BJ (cell line): ENCODE measurements at regions of chr7 and their contacts with region 1.

Region 1: DNA sequence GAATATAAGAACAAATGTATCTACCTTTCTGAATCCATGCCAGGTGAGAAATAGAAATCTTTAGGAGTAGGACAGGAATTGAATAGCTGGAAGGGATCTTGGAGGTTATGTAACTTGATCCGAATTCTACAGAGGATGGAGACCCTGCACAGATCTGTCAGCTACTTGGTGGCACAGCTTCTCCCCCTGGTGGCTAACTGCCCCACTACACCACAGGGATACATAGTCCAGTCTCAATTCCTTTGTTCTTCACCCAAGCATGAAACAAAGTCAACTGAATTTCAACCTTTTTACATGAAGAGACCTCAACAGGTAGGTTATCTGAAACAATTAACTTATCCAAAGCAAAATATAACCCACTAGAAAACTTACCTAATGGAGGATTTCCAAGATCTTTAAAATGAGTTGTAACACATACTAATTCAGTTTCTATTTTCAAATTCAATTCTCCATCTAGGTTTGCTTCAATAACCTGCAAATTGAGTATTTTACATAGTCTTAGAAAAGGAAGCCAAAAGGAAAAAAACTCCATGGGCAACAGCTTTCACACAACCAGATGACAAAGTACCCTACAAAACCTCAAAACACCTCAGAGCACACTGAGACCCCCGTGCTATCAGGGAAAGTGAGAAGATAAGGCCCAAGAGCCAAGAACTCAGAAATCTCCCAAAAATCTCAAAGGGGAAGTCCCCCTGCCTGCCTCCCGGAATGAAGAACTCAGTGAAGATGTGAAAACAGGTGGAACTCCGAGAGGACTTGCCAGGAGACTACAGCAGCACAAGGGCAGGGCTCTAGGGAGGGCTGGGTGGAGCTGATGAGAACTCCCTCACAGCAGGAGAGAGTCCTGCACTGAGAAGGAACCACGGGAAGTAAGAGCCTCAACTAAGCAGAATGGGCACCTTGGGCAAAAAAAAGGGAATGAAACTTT is 10.3 kb downstream of the HUS1 start:
- DNase-seq: no peak
- H3K4me3 ChIP-seq: no peak overlapping the region
- H3K27me3 ChIP-seq: no peaks in the 10 kb centered on the region
- CTCF ChIP-seq: peak; percentile 94

Region 2: GRCh38 chr7:47852330-47853245 is 116.5 kb before region 1 on chr7:
- CTCF ChIA-PET with region 1: no interaction called
- POLR2A ChIA-PET with region 1: no interaction called
- DNase-seq: no peak
- H3K4me3 ChIP-seq: no peak overlapping the region
- H3K27me3 ChIP-seq: 0 out of 2 replicates have a peak, but pooled peaks cover 2% of the 10 kb centered on the region
- CTCF ChIP-seq: 0 out of 2 replicates have a peak, but pooled peaks have one; percentile 19

Region 3: DNA sequence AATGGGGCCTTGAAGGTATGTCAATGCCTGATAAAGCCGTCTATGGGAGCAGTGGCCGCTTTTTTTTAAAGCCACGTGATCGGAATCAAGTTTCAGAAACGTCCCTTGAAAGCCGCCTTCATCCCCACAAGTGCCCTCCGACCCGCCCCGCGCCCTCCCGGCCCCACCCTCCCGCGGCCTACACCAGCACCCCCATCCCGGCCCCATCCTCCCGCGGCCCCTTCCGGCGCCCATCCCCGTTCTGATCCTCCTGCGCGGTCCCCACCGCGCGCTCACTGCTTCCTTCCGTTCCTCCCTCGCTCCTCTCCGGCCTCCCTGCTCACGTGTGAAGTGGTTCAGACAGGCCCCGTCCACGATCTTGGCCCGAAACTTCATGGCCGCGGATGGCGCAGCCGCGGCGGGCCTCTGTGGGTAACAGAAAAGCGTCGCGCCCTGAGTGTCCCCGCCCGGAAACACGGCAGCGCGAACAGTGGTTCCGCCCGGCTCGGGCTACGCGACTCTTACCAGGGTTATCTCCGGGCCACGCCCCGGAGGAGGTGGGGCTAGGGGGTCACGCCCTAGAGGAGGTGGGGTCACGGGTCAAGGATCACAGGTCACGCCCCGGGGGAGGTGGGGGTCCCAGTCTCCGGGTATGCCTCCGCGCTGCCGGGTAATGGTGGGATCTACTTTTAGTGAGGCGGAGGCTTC is 10.2 kb after region 1 on chr7 and contains the start of gene HUS1:
- CTCF ChIA-PET with region 1: interaction called, 17 read pairs
- POLR2A ChIA-PET with region 1: no interaction called
- DNase-seq: peak; percentile 33
- H3K4me3 ChIP-seq: peak within 1 kb of the TSS; percentile 74
- H3K27me3 ChIP-seq: no peaks in the 10 kb centered on the region
- CTCF ChIP-seq: no peak
- polyA plus RNA-seq, gene HUS1: 14.1 and 23.7 TPM in 2 replicates

Region 4: GRCh38 chr7:48351900-48352299 is 382.8 kb after region 1 on chr7:
- CTCF ChIA-PET with region 1: no interaction called
- POLR2A ChIA-PET with region 1: no interaction called
- DNase-seq: no peak
- H3K4me3 ChIP-seq: no peak overlapping the region
- H3K27me3 ChIP-seq: no peaks in the 10 kb centered on the region
- CTCF ChIP-seq: no peak

Region 5: DNA sequence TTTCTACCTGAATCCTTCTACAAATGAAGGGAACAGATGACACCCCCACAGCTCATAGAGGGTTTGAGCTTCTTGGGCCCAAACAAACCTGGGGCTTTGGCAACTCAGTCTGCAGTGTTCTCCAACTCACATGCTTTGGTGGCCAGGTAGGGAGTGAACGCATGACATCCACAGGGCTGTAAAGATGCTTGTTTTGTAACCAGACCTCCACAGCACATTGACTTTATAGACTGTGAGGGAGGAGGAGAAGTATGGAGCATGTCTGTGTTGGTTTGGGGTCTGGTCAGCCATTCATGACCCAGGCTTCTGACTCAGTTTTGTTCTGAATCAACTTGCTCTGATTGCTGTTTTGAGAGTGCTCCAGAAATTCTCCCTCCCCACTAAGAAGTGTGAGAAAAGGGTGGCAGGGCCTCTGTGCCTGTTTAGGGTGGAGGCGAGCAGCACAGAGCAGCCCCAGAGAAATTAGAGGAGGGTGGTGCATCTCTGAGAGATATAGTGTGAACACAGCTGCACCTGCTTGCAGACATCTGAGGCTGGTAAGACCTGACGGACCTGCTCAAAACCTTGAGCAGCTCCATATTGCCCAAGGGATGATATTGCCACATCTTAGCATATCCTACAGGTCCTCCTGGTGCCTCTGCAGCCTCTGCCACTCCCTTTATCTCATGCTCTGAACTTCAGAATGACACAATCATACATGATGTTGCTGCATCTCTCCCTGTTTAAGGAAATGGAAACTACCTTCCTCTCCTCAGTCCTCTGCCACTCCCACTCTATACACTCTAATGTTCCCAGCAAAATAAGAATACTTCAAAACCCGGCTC is 489.8 kb after region 1 on chr7:
- CTCF ChIA-PET with region 1: no interaction called
- POLR2A ChIA-PET with region 1: no interaction called
- DNase-seq: no peak
- H3K4me3 ChIP-seq: no peak overlapping the region
- H3K27me3 ChIP-seq: no peaks in the 10 kb centered on the region
- CTCF ChIP-seq: no peak